Activated CD8-positive, alpha-beta T cell treated with anti-CD3 and anti-CD28 coated beads for 36 hours (primary cell): ENCODE measurements at regions of chr12 and their contacts with region 1.

Region 1: GRCh38 chr12:12376646-12377448 is 20.0 kb downstream of the BORCS5 start:
- DNase-seq: peak; percentile 20
- ATAC-seq: peak; percentile 66
- H3K4me3 Mint-ChIP-seq: no peak overlapping the region
- H3K27ac Mint-ChIP-seq: peak overlapping the region; percentile 25
- H3K4me1 Mint-ChIP-seq: peaks cover 33% of the 10 kb centered on the region
- H3K27me3 Mint-ChIP-seq: no peaks in the 10 kb centered on the region
- CTCF ChIP-seq: peak; percentile 70

Region 2: GRCh38 chr12:12201274-12201758 is 175.5 kb before region 1 on chr12:
- CTCF ChIA-PET with region 1: no interaction called
- POLR2A ChIA-PET with region 1: no interaction called
- intact Hi-C with region 1: no loop called
- DNase-seq: peak; percentile 39
- ATAC-seq: peak; percentile 51
- H3K4me3 Mint-ChIP-seq: no peak overlapping the region
- H3K27ac Mint-ChIP-seq: no peak overlapping the region
- H3K4me1 Mint-ChIP-seq: no peaks in the 10 kb centered on the region
- H3K27me3 Mint-ChIP-seq: peaks cover 15% of the 10 kb centered on the region
- CTCF ChIP-seq: no peak

Region 3: GRCh38 chr12:12365931-12366431 is 10.9 kb before region 1 on chr12:
- CTCF ChIA-PET with region 1: interaction called, 34 read pairs
- POLR2A ChIA-PET with region 1: interaction called, 3 read pairs
- intact Hi-C with region 1: no loop called
- DNase-seq: no peak
- ATAC-seq: peak; percentile 53
- H3K4me3 Mint-ChIP-seq: no peak overlapping the region
- H3K27ac Mint-ChIP-seq: peak overlapping the region; percentile 54
- H3K4me1 Mint-ChIP-seq: peaks cover 42% of the 10 kb centered on the region
- H3K27me3 Mint-ChIP-seq: no peaks in the 10 kb centered on the region
- CTCF ChIP-seq: no peak

Region 4: DNA sequence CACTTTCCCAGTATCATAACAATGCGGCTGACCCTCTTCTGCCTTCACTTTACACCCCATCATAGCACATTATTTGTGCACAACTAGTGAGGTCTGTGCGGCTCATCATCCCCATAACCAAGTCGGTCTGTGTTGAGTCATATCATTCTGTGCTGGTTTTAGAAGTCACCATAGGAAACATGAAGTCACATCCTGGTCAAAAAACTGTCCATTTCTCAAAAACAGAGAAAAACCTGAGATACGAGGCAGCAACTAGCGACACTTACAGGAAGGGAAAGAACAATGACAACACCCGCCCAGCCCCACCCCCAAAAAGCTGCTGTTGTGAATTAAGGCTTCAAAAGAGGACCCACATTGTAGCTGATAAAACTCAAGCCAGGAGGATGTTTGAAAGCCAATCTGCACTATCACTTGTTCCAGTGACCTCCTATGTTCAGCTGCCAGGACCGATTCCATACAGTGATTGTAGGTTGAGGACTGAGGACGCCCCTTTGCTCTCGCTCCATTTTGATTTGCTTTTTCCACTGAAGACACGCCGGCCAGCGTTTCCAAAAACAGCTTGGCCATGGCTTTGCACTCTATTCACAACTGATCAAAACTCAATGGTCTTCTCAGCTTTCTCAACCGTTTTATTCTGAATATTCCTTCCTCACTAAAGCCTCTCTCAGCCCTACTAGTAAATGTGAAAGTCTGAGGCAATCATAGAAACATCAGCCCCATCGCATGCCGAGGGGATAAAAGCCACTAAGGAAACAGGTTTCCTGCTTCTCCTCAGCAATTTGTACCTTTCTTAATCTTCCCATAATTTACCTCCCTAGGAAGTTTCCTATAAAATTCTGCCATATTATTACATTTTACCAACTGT is 98.3 kb after region 1 on chr12:
- CTCF ChIA-PET with region 1: interaction called, 14 read pairs
- POLR2A ChIA-PET with region 1: interaction called, 4 read pairs
- intact Hi-C with region 1: loop called (anchors 5 kb)
- DNase-seq: peak; percentile 76
- ATAC-seq: peak; percentile 88
- H3K4me3 Mint-ChIP-seq: peak overlapping the region; percentile 51
- H3K27ac Mint-ChIP-seq: peak overlapping the region; percentile 99
- H3K4me1 Mint-ChIP-seq: peaks cover 61% of the 10 kb centered on the region
- H3K27me3 Mint-ChIP-seq: no peaks in the 10 kb centered on the region
- CTCF ChIP-seq: no peak

Region 5: GRCh38 chr12:12562585-12563261 is 185.9 kb after region 1 on chr12 and contains the start of gene DUSP16:
- CTCF ChIA-PET with region 1: interaction called, 34 read pairs
- POLR2A ChIA-PET with region 1: no interaction called
- intact Hi-C with region 1: loop called (anchors 1 kb)
- DNase-seq: peak; percentile 82
- ATAC-seq: peak; percentile 78
- H3K4me3 Mint-ChIP-seq: peak within 1 kb of the TSS; percentile 89
- H3K27ac Mint-ChIP-seq: peak within 1 kb of the TSS; percentile 91
- H3K4me1 Mint-ChIP-seq: peaks cover 33% of the 10 kb centered on the region
- H3K27me3 Mint-ChIP-seq: no peaks in the 10 kb centered on the region
- CTCF ChIP-seq: no peak
- total RNA-seq, gene DUSP16: 28.2 to 30.2 TPM

Region 6: GRCh38 chr12:12661086-12661485 is 284.2 kb after region 1 on chr12:
- CTCF ChIA-PET with region 1: interaction called, 53 read pairs
- POLR2A ChIA-PET with region 1: no interaction called
- intact Hi-C with region 1: loop called (anchors 2 kb)
- DNase-seq: no peak
- ATAC-seq: no peak
- H3K4me3 Mint-ChIP-seq: no peak overlapping the region
- H3K27ac Mint-ChIP-seq: no peak overlapping the region
- H3K4me1 Mint-ChIP-seq: peaks cover under 1% of the 10 kb centered on the region
- H3K27me3 Mint-ChIP-seq: no peaks in the 10 kb centered on the region
- CTCF ChIP-seq: no peak